Activated CD4-positive, alpha-beta memory T cell treated with anti-CD3 and anti-CD28 coated beads for 36 hours (primary cell): ENCODE measurements at regions of chr1 and their contacts with region 1.

Region 1: GRCh38 chr1:219999821-220000220 is 46.5 kb downstream of the EPRS1 start:
- DNase-seq: no peak
- H3K4me3 Mint-ChIP-seq: no peak overlapping the region
- H3K27ac Mint-ChIP-seq: no peak overlapping the region
- H3K4me1 Mint-ChIP-seq: peaks cover 4% of the 10 kb centered on the region
- H3K27me3 Mint-ChIP-seq: no peaks in the 10 kb centered on the region

Region 2: DNA sequence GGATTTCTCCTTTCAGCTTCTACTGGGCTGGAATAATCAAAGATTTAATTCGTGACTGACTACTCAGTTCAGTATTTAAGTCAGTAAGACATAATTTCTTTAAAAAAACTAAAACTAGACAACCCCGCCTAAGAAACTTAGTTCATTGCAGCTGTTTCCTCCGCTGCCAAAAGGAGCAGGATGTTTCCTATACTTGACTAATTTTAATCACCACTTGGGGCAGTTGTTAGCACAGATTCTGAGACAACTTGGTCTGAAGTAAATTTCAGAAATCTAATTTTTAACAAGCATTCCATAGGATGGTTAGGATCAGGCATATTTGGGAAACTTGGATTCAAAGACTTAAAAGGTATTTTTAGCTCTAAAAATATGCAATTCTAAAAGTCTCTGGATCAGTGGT is 12.4 kb after region 1 on chr1:
- CTCF ChIA-PET with region 1: interaction called, 12 read pairs
- POLR2A ChIA-PET with region 1: no interaction called
- intact Hi-C with region 1: no loop called
- DNase-seq: no peak
- H3K4me3 Mint-ChIP-seq: no peak overlapping the region
- H3K27ac Mint-ChIP-seq: peak overlapping the region; percentile 18
- H3K4me1 Mint-ChIP-seq: peaks cover 20% of the 10 kb centered on the region
- H3K27me3 Mint-ChIP-seq: no peaks in the 10 kb centered on the region